BJ (cell line): ENCODE measurements at regions of chr13 and their contacts with region 1.

Region 1: GRCh38 chr13:42836930-42837690 is 55.7 kb downstream of the FAM216B start:
- DNase-seq: no peak
- H3K4me3 ChIP-seq: no peak overlapping the region
- H3K27me3 ChIP-seq: peaks cover 3% of the 10 kb centered on the region
- CTCF ChIP-seq: peak; percentile 48

Region 2: DNA sequence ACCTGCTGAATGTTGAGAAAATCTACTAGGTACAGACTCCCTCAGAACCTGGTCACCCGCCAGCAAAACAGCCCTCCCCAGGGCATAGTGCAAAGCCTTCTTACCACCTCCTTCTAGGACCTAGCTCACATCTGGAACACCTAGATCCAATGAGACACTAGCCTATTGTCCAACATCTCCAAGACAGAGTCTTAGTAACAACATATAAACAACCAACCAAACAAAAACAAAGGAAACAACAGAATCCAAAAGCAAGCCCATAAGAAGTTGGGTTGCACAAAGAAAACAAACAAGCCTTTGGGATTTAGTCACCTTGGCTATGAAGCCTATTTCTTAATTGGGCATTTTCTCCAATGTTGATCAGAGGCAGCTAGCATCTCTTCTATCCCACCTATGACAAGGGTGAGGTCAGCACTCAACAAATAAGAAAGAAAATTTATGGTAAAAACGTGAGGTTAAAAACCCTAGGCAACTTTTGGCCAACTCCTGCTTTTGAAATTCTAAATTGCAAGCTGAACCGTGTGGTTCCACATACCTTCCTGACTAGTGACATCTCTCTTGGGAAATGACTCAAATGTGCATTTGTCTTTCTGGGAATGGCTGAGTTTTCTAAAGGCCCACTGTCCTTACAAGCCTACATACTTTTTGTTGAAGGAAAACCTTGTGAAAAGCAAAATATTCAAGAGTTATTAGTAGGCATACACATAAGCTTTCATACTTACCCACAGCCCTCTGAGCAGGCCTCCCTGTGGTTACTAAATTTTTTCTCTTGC is 11.0 kb after region 1 on chr13:
- CTCF ChIA-PET with region 1: interaction called, 18 read pairs
- POLR2A ChIA-PET with region 1: no interaction called
- DNase-seq: no peak
- H3K4me3 ChIP-seq: no peak overlapping the region
- H3K27me3 ChIP-seq: no peaks in the 10 kb centered on the region
- CTCF ChIP-seq: no peak

Region 3: DNA sequence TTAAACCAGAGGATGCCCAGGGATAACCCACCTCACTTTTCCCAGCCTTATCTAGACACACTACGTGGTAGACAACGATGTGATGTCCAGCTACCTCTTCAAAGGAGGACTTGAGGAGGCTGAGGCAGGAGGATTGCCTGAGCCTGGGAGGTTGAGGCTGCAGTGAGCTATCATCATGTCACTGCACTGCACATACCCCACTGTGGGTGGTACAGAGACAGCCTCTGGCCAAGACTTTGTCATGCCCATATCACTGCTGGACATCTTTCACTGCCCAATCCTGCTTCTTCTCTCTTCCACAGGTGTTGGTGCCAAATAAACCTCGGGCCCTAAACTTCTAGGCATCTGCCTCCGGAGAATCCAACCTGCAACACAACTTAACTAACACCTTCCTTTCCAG is 30.1 kb after region 1 on chr13:
- CTCF ChIA-PET with region 1: no interaction called
- POLR2A ChIA-PET with region 1: no interaction called
- DNase-seq: no peak
- H3K4me3 ChIP-seq: no peak overlapping the region
- H3K27me3 ChIP-seq: no peaks in the 10 kb centered on the region; the same call in 1 of the 2 replicates
- CTCF ChIP-seq: no peak